Gastrocnemius medialis (tissue), 4 donors: ENCODE measurements at regions of chr6 and their contacts with region 1.

Region 1: GRCh38 chr6:42043787-42044475 is 6.4 kb upstream of the TAF8 start:
- DNase-seq: peak; percentile 55 to 76
- ATAC-seq: peak; percentile 76 to 81
- H3K4me3 ChIP-seq: peak overlapping the region in 1 of 4 donors; percentile 3
- H3K27ac ChIP-seq: peak overlapping the region in 3 of 4 donors; percentile 89 to 94 (median 93)
- H3K4me1 ChIP-seq: peaks cover 9 to 41% of the 10 kb centered on the region in 2 donors
- H3K27me3 ChIP-seq: peaks cover 0 to 7% (median 0%) of the 10 kb centered on the region in 3 donors
- CTCF ChIP-seq: peak; percentile 90 to 98 (median 96)
- POLR2A ChIP-seq: no peak

Region 2: DNA sequence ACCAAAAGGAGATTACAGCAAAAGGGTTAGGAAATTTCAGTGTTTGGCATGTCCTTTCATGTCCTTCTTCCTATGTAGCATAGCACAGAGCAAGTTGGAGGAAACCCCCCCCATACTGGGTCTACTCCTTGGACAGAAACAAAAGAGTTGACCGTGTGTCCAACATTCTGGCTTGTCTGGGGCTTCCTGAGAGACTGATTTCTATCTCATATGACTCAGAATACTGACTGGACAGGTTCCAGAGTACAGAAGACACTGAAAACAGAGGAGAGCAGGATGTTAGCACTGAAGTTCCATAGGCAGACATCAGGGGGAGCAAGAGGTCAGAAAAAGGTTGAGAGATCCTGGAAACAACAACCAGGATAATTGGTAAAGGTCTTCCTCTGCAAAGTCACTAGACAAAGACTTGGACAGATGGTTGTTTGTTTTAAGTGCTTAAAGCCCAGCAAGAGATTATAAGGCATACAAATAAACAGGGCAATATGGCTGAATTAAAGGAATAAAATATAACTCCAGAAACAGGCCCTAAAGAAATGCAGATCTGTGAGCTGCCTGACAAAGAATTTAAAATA is 197.2 kb before region 1 on chr6:
- in situ Hi-C with region 1: loop called in 2 of 4 experiments (anchors 5 kb)
- intact Hi-C with region 1: loop called (anchors 1 kb)
- DNase-seq: peak; percentile 16 to 52
- ATAC-seq: peak; percentile 97 to 99
- H3K4me3 ChIP-seq: no peak overlapping the region
- H3K27ac ChIP-seq: peak overlapping the region in 3 of 4 donors; percentile 10 to 49 (median 19)
- H3K4me1 ChIP-seq: no peaks in the 10 kb centered on the region
- H3K27me3 ChIP-seq: no peaks in the 10 kb centered on the region
- CTCF ChIP-seq: peak; percentile 45 to 74 (median 69)
- POLR2A ChIP-seq: no peak

Region 3: GRCh38 chr6:41936073-41936837 is 107.7 kb before region 1 on chr6:
- in situ Hi-C with region 1: loop called in 3 of 4 experiments (anchors 5 to 10 kb)
- intact Hi-C with region 1: loop called (anchors 5 kb)
- DNase-seq: peak; percentile 45 to 82
- ATAC-seq: peak; percentile 83 to 91
- H3K4me3 ChIP-seq: no peak overlapping the region
- H3K27ac ChIP-seq: peak overlapping the region in 1 of 4 donors; percentile 31
- H3K4me1 ChIP-seq: peaks cover 16 to 27% of the 10 kb centered on the region in 2 donors
- H3K27me3 ChIP-seq: no peaks in the 10 kb centered on the region
- CTCF ChIP-seq: peak; percentile 62 to 85 (median 80)
- POLR2A ChIP-seq: no peak

Region 4: DNA sequence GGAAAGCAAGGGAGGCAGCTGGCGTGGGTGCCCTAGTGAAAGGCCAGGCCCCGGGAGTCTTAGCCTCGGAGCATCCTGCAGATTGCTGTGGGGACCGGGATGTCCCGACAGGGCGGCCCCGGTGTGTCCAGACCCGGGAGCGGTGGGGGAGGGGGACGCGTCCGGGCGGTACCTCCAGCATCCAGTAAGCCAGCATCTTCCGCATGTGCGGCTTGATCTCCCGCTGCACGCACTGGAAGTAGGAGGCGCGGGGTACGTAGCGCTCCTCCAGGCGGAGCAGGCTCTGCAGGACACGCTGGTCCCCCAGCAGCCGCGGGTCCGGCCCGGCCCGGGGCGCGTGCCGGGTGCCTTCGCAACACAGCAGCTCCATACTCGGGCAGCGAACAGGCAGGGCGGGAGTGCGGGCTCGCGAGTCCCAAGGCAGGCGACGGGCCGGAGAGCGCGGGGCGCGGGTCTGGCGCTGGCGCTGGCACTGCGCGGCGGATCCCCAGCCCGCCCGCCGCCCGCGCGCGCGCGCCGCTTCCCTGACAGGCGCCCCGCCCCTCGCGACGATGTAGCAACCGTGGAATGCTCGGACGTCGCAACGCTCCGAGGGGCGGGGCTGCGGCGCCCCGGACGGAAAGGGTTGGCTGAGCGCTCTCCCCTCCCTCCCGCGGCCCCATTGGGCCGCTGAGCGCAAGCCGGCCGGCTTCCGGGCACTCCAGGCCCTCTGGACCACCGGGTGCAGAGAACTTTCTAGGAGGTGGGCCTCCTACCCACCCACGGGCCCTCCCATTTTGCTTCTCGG is 102.5 kb before region 1 on chr6 and contains the start of gene CCND3:
- in situ Hi-C with region 1: loop called in 3 of 4 experiments (anchors 5 to 10 kb)
- intact Hi-C with region 1: loop called (anchors 5 kb)
- DNase-seq: peak; percentile 78 to 84
- ATAC-seq: peak; percentile 92 to 94
- H3K4me3 ChIP-seq: peak within 1 kb of the TSS; percentile 66 to 97 (median 72)
- H3K27ac ChIP-seq: peak within 1 kb of the TSS; percentile 67 to 79 (median 74)
- H3K4me1 ChIP-seq: peaks cover 21 to 33% of the 10 kb centered on the region in 2 donors
- H3K27me3 ChIP-seq: no peaks in the 10 kb centered on the region
- CTCF ChIP-seq: peak in 1 of 5 experiments; percentile 16
- POLR2A ChIP-seq: peak; percentile 42 to 46
- total RNA-seq, gene CCND3: 28.9 to 48.7 (median 44.7) TPM